Activated CD8-positive, alpha-beta T cell treated with anti-CD3 and anti-CD28 coated beads, Interleukin-2, amount 10 ng/mL, durations not matched to agents 7 days and 5 days (primary cell): ENCODE measurements at regions of chr18 and their contacts with region 1.

Region 1: GRCh38 chr18:8982416-8983184 is 119.9 kb upstream of the NDUFV2 start:
- DNase-seq: peak; percentile 49
- ATAC-seq: peak; percentile 51
- H3K4me3 Mint-ChIP-seq: no peak overlapping the region
- H3K27ac Mint-ChIP-seq: no peak overlapping the region
- H3K4me1 Mint-ChIP-seq: no peaks in the 10 kb centered on the region
- H3K27me3 Mint-ChIP-seq: peaks cover 8% of the 10 kb centered on the region

Region 2: GRCh38 chr18:8654503-8655451 is 327.8 kb before region 1 on chr18:
- CTCF ChIA-PET with region 1: interaction called, 44 read pairs
- POLR2A ChIA-PET with region 1: no interaction called
- DNase-seq: no peak
- ATAC-seq: no peak
- H3K4me3 Mint-ChIP-seq: no peak overlapping the region
- H3K27ac Mint-ChIP-seq: no peak overlapping the region
- H3K4me1 Mint-ChIP-seq: no peaks in the 10 kb centered on the region
- H3K27me3 Mint-ChIP-seq: peaks cover 20% of the 10 kb centered on the region

Region 3: GRCh38 chr18:8969639-8970390 is 12.8 kb before region 1 on chr18:
- CTCF ChIA-PET with region 1: no interaction called
- POLR2A ChIA-PET with region 1: no interaction called
- DNase-seq: no peak
- ATAC-seq: no peak
- H3K4me3 Mint-ChIP-seq: no peak overlapping the region
- H3K27ac Mint-ChIP-seq: no peak overlapping the region
- H3K4me1 Mint-ChIP-seq: no peaks in the 10 kb centered on the region
- H3K27me3 Mint-ChIP-seq: peaks cover 10% of the 10 kb centered on the region